IMR-90 (cell line): ENCODE measurements at regions of chr7 and their contacts with region 1.

Region 1: DNA sequence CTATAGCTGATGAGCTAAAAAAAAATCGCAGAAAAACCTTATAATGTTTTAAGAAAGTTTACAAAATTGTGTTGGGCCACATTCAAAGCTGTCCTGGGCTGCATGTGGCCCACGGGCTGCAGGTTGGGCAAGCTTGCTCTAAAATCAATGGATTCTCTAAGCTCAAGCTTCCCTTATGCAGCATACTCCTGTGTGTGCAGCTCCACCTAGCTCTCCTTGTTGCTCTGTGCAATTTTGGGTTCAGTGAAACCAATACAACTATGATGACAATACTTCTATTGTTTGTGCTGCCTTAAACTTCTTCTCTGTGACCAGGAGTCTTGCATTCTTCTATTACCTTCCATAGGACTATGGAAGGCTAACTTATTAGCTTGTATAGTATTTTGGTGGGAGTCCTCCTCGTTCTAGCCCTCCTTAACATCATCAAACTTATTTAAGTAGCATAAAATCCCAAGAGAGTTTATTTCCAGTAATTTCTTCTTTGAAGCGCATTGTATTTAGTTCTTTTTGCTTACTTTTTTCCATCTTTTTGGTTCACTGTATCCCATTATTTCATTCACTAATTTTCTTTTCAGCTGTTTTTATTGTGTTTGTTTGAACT is 170.9 kb upstream of the SMIM30 start:
- DNase-seq: peak; percentile 71
- ATAC-seq: peak; percentile 95
- H3K4me3 ChIP-seq: no peak overlapping the region
- H3K27ac ChIP-seq: no peak overlapping the region
- H3K4me1 ChIP-seq: no peaks in the 10 kb centered on the region
- H3K27me3 ChIP-seq: no peaks in the 10 kb centered on the region
- CTCF ChIP-seq: peak; percentile 67
- POLR2A ChIP-seq: no peak
- RAD21 ChIP-seq: peak; percentile 78

Region 2: DNA sequence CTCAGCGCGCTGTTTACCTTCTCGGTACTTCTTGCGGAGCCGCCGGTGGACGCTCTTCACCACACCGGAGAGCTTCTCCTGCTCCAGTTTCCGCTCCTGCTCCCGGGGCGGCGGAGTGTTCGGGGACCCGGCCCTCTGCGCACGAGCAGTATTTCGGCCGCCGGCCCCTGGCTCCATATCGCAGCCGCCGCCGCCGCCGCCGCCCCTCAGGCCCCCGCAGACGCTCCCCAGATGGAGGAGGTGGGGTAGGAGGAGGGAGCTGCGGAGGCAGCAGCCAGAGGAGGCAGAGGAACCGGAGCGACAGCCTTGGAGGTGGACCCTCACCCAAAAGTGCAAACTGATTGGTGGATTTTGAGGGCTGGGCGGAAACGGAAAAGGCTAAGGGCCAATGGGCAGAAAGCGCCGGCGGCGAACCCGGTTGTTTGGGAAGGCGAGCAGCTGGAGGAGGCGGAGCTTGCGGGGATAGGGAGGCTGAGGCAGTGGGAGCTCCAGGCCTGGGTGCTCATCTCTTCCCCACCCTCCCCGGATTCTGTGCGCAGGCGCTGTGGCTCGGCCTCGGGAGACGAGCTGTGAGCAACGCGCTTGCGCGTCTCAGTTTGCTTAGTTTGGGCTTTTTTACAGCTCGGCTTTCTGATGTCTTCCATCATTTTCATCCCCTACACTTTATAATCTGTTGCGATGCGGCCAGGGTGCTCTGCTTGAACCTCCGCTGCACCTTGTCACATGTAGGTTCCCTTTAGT is 349.5 kb before region 1 on chr7:
- CTCF ChIA-PET with region 1: no interaction called
- POLR2A ChIA-PET with region 1: no interaction called
- dilution Hi-C with region 1: no loop called
- in situ Hi-C with region 1: no loop called
- intact Hi-C with region 1: loop called (anchors 10 kb)
- DNase-seq: peak; percentile 99
- ATAC-seq: peak; percentile 97
- H3K4me3 ChIP-seq: peak overlapping the region; percentile 70
- H3K27ac ChIP-seq: peak overlapping the region; percentile 88
- H3K4me1 ChIP-seq: peaks cover 3% of the 10 kb centered on the region; the same call in 1 of the 2 replicates
- H3K27me3 ChIP-seq: no peaks in the 10 kb centered on the region
- CTCF ChIP-seq: no peak
- POLR2A ChIP-seq: no peak
- RAD21 ChIP-seq: no peak

Region 3: GRCh38 chr7:113015032-113015645 is 274.1 kb before region 1 on chr7:
- CTCF ChIA-PET with region 1: interaction called, 5 read pairs
- POLR2A ChIA-PET with region 1: no interaction called
- dilution Hi-C with region 1: no loop called
- in situ Hi-C with region 1: loop called (anchors 25 kb)
- intact Hi-C with region 1: loop called (anchors 1 kb)
- DNase-seq: peak; percentile 60
- ATAC-seq: peak; percentile 53
- H3K4me3 ChIP-seq: no peak overlapping the region
- H3K27ac ChIP-seq: no peak overlapping the region
- H3K4me1 ChIP-seq: peaks cover 2% of the 10 kb centered on the region; the same call in 1 of the 2 replicates
- H3K27me3 ChIP-seq: no peaks in the 10 kb centered on the region
- CTCF ChIP-seq: peak; percentile 65
- POLR2A ChIP-seq: no peak
- RAD21 ChIP-seq: peak; percentile 72

Region 4: DNA sequence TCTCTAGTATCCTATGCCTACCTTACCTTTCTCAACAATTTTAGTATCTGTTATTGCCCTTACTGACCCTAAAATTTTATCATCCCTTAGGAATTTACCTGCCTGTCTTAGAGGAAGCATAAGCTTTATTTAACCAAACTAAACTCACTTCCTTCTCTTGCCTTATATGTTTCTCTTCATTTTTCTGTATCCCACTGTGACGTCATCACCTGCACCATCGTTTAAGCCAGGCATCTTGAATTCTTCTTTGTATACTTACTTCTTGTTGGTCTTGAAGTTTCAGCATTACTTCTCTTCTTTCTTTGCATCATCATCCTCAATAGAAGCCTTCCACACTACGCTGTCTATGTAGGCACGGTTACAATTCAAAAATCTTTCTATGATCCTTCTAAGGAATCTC is 60.1 kb after region 1 on chr7:
- CTCF ChIA-PET with region 1: no interaction called
- POLR2A ChIA-PET with region 1: no interaction called
- dilution Hi-C with region 1: no loop called
- in situ Hi-C with region 1: no loop called
- intact Hi-C with region 1: no loop called
- DNase-seq: no peak
- ATAC-seq: no peak
- H3K4me3 ChIP-seq: no peak overlapping the region
- H3K27ac ChIP-seq: no peak overlapping the region
- H3K4me1 ChIP-seq: no peaks in the 10 kb centered on the region
- H3K27me3 ChIP-seq: no peaks in the 10 kb centered on the region
- CTCF ChIP-seq: no peak
- POLR2A ChIP-seq: no peak
- RAD21 ChIP-seq: no peak

Region 5: GRCh38 chr7:113705439-113705838 is 416.2 kb after region 1 on chr7:
- CTCF ChIA-PET with region 1: no interaction called
- POLR2A ChIA-PET with region 1: no interaction called
- dilution Hi-C with region 1: no loop called
- in situ Hi-C with region 1: no loop called
- intact Hi-C with region 1: loop called (anchors 10 kb)
- DNase-seq: no peak
- ATAC-seq: no peak
- H3K4me3 ChIP-seq: no peak overlapping the region
- H3K27ac ChIP-seq: no peak overlapping the region
- H3K4me1 ChIP-seq: no peaks in the 10 kb centered on the region
- H3K27me3 ChIP-seq: no peaks in the 10 kb centered on the region
- CTCF ChIP-seq: no peak
- POLR2A ChIP-seq: no peak
- RAD21 ChIP-seq: no peak